ENCODE measurements at regions of chr12 and their contacts with region 1.

Region 1: DNA sequence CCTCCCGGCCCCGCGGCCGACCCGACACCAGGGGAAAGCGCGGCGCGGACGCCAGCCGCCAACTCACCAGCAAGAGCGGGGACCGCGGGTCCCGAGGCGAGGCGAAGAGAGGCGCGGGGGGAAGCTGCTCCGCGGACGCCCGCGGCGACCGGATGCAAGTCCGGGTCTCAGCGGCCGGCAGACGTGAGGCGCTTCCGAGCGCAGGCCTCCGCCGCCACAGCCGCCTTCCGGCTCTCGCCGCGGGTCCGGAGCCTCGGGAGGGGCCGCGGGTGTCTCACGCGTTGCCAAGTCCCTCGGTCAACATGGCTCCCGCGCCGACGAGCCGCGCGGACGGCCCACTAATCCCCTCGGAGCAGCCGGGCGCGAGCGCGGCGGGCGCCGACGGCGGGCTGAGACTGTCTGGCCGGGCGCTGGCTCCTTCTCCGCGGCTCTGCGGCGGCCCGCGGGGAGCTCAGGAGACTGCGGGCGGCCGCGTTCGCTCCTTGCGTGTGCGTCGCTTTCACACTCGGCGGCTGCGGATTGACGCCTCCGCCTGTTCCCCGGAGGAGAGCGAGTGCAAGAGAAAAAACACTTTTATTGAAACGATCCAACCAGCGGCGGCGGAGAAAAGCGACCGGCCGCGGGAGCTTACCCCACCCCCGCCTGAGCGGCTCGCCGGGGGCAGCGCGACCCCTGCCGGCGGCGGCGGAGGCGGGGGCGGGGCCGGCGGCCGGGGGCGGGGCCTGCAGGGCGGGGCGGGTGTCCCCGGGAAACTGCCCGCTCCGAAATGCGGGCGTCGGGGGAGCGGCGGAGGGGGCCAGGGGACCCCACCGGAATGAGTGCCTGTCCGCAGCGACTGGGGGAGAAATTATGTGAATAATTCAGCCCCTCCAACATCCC is at the start of gene CDK17:
- DNase-seq: peak; percentile 69
- H3K4me3 ChIP-seq: peak within 1 kb of the TSS; percentile 88
- CTCF ChIP-seq: peak; percentile 31

Region 2: DNA sequence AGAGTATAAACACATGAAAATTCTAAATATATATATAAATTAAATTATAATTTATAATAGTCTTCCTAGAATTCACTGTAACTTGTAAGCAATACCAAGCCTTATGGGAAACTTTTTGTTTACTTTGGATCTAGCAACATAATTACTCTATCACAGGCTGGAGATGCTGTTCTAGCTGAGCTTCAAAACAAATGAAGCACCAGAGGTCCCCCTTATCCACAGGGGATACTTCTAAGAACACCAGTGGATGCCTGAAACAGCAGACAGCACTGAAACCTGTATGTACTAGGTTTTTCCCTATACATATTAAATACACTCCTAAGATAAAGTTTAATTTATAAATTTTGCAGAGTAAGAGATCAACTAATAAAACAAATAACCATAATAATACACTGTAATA is 96.5 kb before region 1 on chr12:
- in situ Hi-C with region 1: loop called (anchors 5 kb)
- DNase-seq: no peak
- H3K4me3 ChIP-seq: no peak overlapping the region
- CTCF ChIP-seq: no peak

Region 3: GRCh38 chr12:96456265-96456974 is 56.3 kb after region 1 on chr12:
- in situ Hi-C with region 1: no loop called
- DNase-seq: no peak
- H3K4me3 ChIP-seq: no peak overlapping the region
- CTCF ChIP-seq: no peak

Region 4: DNA sequence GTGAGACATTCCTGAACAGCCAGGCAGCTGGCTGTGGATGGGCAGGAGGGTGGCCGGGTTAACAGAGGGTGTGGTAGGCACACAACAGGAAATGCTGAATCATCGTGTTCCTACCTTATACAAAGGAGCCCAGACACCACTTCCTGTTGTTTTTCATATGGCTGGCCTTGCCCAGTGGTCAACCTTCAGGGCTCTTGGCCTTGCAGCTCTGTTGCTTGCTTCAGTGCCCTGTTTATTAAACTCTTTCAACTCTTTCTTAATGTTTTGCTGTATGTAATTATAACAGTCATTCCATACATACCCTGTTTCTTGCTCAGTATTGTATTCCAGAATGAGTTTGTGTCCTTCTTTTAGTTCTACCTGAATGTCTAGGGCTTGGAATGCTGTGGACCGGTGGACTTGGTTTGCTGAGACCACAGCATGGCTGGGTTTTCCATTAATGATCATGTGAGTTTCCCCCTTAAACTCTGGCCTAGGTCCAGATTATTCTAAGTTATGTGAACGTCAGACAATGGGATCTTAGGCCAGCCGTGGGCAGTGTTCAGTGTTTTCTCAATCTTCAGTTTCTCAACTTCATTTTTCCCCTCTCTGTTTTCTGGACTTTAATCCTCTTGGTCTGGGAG is 101.1 kb after region 1 on chr12:
- in situ Hi-C with region 1: loop called (anchors 5 kb)
- DNase-seq: no peak
- H3K4me3 ChIP-seq: no peak overlapping the region
- CTCF ChIP-seq: no peak

Measured in astrocyte of the cerebellum (primary cell).